PC-3 (cell line): ENCODE measurements at regions of chr5 and their contacts with region 1.

Region 1: DNA sequence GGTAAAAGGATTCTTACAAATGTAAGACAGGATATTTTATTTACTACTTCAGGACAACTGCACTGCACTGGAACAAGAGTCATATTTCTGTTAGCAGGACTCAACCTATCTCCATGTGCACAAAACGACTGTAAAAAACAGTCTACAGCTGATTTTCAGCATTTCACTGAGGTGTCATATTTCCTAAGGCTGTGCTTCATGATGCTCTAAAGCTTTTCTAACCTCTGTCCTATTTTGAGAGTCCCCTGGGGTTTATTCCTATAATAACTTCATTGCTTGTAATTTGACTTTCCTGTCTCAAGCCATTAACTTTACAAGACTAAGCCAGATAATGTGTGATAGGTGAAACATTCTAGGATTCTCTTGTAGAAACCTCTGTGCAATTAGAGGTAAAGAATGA is 472.3 kb downstream of the HINT1 start:
- DNase-seq: peak; percentile 51
- ATAC-seq: peak; percentile 88
- H3K4me3 ChIP-seq: no peak overlapping the region
- H3K27ac ChIP-seq: peak overlapping the region; percentile 85
- H3K4me1 ChIP-seq: peaks cover 14% of the 10 kb centered on the region
- H3K27me3 ChIP-seq: no peaks in the 10 kb centered on the region
- CTCF ChIP-seq: no peak

Region 2: DNA sequence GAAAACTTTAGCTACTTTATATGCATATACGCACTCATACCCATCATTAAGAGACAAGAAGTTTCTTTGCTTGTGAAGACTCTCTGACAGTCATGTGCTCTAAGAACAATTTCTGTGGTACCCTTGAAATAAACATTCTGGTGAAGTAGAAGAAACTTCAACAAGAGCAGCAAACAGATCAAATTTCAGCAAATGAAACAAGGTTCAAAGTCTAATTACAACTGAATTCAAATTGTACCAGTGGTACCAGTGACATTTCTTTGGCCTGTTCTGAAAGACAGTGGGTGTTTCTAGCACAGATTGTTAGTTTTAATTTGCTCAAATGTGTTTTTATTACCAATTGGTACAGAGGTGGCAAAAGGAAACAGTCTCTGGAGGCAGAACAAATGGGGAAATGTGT is 397.5 kb before region 1 on chr5:
- CTCF ChIA-PET with region 1: no interaction called
- POLR2A ChIA-PET with region 1: no interaction called
- intact Hi-C with region 1: loop called (anchors 5 kb)
- DNase-seq: no peak
- ATAC-seq: no peak
- H3K4me3 ChIP-seq: no peak overlapping the region
- H3K27ac ChIP-seq: peak overlapping the region; percentile 8; the same call in 1 of the 2 replicates
- H3K4me1 ChIP-seq: peaks cover 10% of the 10 kb centered on the region
- H3K27me3 ChIP-seq: no peaks in the 10 kb centered on the region
- CTCF ChIP-seq: no peak

Region 3: GRCh38 chr5:130678637-130679036 is 14.1 kb before region 1 on chr5:
- CTCF ChIA-PET with region 1: no interaction called
- POLR2A ChIA-PET with region 1: interaction called, 4 read pairs
- intact Hi-C with region 1: loop called (anchors 1 kb)
- DNase-seq: peak; percentile 7
- ATAC-seq: peak; percentile 95
- H3K4me3 ChIP-seq: no peak overlapping the region
- H3K27ac ChIP-seq: peak overlapping the region; percentile 20; the same call in 1 of the 2 replicates
- H3K4me1 ChIP-seq: peaks cover 3% of the 10 kb centered on the region; the same call in 1 of the 2 replicates
- H3K27me3 ChIP-seq: no peaks in the 10 kb centered on the region
- CTCF ChIP-seq: no peak

Region 4: GRCh38 chr5:130710596-130710995 is 17.8 kb after region 1 on chr5:
- CTCF ChIA-PET with region 1: no interaction called
- POLR2A ChIA-PET with region 1: interaction called, 4 read pairs
- intact Hi-C with region 1: loop called (anchors 1 kb)
- DNase-seq: peak; percentile 87
- ATAC-seq: peak; percentile 77
- H3K4me3 ChIP-seq: no peak overlapping the region
- H3K27ac ChIP-seq: peak overlapping the region; percentile 99
- H3K4me1 ChIP-seq: peaks cover 61% of the 10 kb centered on the region
- H3K27me3 ChIP-seq: no peaks in the 10 kb centered on the region
- CTCF ChIP-seq: no peak

Region 5: GRCh38 chr5:130727830-130728229 is 35.1 kb after region 1 on chr5:
- CTCF ChIA-PET with region 1: no interaction called
- POLR2A ChIA-PET with region 1: no interaction called
- intact Hi-C with region 1: no loop called
- DNase-seq: no peak
- ATAC-seq: no peak
- H3K4me3 ChIP-seq: no peak overlapping the region
- H3K27ac ChIP-seq: no peak overlapping the region
- H3K4me1 ChIP-seq: 0 out of 2 replicates have a peak, but pooled peaks cover 9% of the 10 kb centered on the region
- H3K27me3 ChIP-seq: no peaks in the 10 kb centered on the region
- CTCF ChIP-seq: no peak

Region 6: DNA sequence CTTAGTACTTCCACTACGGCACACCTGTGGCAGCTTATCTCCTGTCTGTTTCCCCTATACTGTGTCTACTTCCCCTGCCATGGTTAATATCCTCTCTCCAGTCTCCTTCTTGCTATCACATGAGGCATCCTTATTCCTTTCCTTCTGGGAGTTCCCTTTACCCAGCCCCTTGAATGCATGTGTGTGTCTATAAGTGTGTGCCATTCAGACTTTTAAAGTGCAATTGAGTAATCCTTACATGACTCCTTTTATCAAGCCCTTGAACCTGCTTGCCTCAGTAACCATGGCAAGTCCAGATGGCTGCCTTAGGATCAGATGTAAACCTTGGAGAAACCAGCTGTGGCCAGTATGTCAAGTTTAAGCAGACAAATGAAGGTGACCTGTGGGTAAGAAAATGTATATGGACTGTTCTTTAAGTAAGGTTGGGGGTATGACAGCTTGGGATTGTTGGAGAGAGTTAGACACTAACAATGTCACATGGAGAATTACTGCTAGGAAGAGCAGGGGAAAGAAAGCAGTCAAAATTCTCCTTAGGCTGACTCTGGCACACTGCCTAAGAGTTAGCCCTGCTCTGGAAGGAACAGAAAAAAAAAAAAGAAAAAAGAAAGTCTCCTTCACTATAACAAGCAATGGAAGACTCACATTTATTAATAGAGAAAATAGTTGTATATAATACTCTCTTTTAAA is 330.2 kb after region 1 on chr5:
- CTCF ChIA-PET with region 1: no interaction called
- POLR2A ChIA-PET with region 1: no interaction called
- intact Hi-C with region 1: no loop called
- DNase-seq: no peak
- ATAC-seq: no peak
- H3K4me3 ChIP-seq: no peak overlapping the region
- H3K27ac ChIP-seq: no peak overlapping the region
- H3K4me1 ChIP-seq: no peaks in the 10 kb centered on the region
- H3K27me3 ChIP-seq: no peaks in the 10 kb centered on the region
- CTCF ChIP-seq: no peak